Activated CD4-positive, alpha-beta T cell treated with anti-CD3 and anti-CD28 coated beads, Interleukin-2, amount 10 ng/mL, durations not matched to agents 24 days and 14 days (primary cell): ENCODE measurements at regions of chr11 and their contacts with region 1.

Region 1: DNA sequence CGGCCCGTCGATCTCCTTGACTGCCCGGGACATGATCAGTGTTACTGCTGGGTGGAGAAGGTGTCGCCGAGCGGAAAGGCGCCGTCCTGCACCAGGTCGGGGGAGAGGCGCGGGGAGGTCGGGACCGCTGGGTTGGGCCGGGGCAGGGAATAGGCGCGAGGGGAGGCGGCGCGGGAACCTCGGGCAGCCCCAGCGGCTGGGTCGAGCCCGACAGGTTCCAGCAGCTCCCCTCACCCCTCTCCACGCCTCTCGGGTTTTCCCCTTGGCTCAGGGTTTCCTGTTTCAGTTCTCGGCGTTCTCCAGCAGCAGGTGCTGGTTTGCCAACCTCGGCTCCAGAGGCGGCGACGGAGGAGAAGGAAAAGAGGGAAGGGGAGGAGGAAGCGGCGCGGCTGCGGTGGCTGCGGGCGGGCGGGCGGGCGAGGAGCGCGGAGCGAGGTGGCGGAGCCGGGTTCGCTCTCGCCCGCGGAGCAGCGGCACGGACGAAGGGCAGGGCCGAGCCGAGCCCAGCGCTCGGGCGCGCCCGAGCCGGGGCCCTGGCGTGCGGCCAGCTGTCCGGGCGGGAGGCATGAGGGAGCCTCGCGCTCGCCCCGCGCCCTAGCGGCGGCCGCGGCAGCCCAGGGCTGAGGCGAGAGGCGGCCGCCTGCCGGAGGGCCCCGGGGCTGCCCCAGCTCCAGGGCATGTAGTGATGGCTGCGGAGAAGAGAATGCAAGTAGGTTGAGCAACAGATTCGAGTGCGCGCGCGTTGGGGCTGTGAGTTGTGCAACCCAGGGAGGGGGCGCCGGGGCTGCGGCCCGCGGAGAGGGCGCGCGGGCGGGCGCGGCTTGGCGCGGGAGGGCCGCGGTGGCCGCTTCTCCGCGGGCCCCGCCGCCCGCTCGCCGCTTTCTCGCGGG is at the start of gene ZC3H12C:
- DNase-seq: peak; percentile 86
- H3K4me3 Mint-ChIP-seq: peak within 1 kb of the TSS; percentile 88
- H3K27ac Mint-ChIP-seq: peak within 1 kb of the TSS; percentile 95
- H3K4me1 Mint-ChIP-seq: peaks cover 18% of the 10 kb centered on the region
- H3K27me3 Mint-ChIP-seq: peaks cover 53% of the 10 kb centered on the region
- total RNA-seq, gene ZC3H12C: 6.7 and 7.5 TPM in 2 replicates

Region 2: GRCh38 chr11:109853156-109853776 is 239.5 kb before region 1 on chr11:
- intact Hi-C with region 1: loop called (anchors 10 kb)
- DNase-seq: peak; percentile 60
- H3K4me3 Mint-ChIP-seq: no peak overlapping the region
- H3K27ac Mint-ChIP-seq: no peak overlapping the region
- H3K4me1 Mint-ChIP-seq: no peaks in the 10 kb centered on the region
- H3K27me3 Mint-ChIP-seq: peaks cover 5% of the 10 kb centered on the region

Region 3: DNA sequence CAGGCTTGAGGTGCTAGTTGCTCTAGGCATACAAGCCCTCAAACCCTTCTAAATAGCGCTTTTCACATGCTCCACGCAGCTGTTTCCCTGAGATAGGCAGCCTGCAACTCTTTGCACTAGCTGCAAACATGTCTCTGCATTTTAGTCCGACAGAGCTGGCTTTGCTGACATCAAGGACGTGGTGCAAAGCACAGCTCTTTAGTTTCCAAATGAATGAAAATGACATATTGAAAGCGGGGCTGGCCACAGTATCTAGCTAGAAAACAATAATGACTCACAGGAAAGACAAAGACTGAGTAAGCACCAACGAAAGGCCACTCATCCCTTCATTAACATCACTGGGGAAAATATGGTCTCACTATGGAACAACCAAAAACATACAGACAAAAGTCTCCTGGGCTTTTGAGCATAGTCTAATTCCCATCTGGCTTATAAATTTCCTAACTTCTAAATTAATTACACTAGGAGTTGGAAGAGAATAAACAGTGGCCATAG is 14.9 kb before region 1 on chr11:
- intact Hi-C with region 1: loop called (anchors 1 kb)
- DNase-seq: peak; percentile 80
- H3K4me3 Mint-ChIP-seq: peak overlapping the region; percentile 43
- H3K27ac Mint-ChIP-seq: peak overlapping the region; percentile 95
- H3K4me1 Mint-ChIP-seq: peaks cover 26% of the 10 kb centered on the region
- H3K27me3 Mint-ChIP-seq: peaks cover 5% of the 10 kb centered on the region

Region 4: DNA sequence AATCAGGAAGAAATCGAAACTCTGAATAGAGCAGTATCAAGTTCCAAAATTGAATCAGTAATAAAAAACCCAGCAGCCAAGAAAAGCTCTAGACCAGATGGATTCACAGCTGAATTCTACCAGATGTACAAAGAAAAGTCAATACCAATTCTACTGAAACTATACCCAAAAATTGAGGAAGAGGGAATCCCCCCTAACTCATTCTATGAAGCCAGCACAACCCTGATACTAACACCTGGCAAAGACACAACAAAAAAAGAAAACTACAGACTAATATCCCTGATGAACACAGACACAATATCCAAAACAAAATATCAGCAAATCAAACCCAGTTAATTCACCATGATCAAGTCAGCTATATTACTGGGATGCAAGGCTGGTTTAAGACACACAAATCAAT is 98.1 kb after region 1 on chr11:
- intact Hi-C with region 1: loop called (anchors 5 kb)
- DNase-seq: no peak
- H3K4me3 Mint-ChIP-seq: no peak overlapping the region
- H3K27ac Mint-ChIP-seq: no peak overlapping the region
- H3K4me1 Mint-ChIP-seq: peaks cover 16% of the 10 kb centered on the region
- H3K27me3 Mint-ChIP-seq: peaks cover 45% of the 10 kb centered on the region

Region 5: GRCh38 chr11:110429731-110430266 is 337.0 kb after region 1 on chr11 and contains the start of gene FDX1:
- intact Hi-C with region 1: loop called (anchors 10 kb)
- DNase-seq: peak; percentile 95
- H3K4me3 Mint-ChIP-seq: peak within 1 kb of the TSS; percentile 99
- H3K27ac Mint-ChIP-seq: peak within 1 kb of the TSS; percentile 98
- H3K4me1 Mint-ChIP-seq: peaks cover 39% of the 10 kb centered on the region
- H3K27me3 Mint-ChIP-seq: no peaks in the 10 kb centered on the region
- total RNA-seq, gene FDX1: 14.2 and 16.4 TPM in 2 replicates

Region 6: DNA sequence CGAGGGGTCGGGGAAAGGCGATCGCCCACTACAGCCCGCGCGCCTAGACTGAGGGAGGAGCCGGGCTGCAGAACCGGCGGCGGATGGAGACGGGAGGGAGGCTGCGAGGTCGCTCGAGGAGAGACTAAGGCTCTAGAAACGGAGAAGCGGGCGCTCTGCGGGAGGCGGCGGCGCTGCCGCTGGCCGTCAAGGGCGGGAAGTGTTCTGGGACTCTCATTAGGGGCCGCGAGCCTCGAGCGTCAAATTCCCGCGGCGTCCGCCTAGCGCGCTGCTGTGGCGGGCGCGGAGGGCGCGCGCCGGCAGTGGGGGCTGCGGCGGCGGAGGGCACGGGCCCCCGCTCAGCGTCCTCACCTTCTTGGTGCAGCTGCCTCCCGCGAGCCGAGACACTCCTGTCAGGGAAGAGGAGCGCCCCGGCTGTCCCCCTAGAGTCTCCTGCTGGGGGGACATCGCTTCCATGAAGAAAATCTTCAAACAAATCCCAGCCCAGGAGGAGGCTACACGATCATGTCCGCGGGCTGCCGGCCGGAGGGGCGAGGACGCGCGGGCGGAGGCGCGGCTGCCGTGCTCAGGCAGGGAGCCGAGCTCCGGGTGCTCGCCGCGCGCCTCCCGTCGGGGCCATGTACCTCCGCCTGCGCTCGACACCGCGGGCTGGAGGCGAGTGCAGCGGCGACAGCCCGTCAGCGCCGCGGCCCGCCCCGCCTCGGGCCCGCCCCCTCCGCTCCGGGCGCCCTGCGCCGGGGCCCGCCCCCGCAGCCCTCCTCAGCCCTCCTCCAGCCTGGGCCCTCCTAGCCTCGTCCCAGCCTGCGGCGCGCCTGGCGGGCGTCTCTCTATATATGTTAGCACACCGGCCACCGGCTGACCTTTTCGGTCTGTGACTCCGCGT is 619.3 kb after region 1 on chr11 and contains the start of gene ARHGAP20:
- intact Hi-C with region 1: loop called (anchors 5 kb)
- DNase-seq: peak; percentile 82
- H3K4me3 Mint-ChIP-seq: peak within 1 kb of the TSS; percentile 65
- H3K27ac Mint-ChIP-seq: no peak within 1 kb of the TSS
- H3K4me1 Mint-ChIP-seq: peaks cover 14% of the 10 kb centered on the region
- H3K27me3 Mint-ChIP-seq: peaks cover 60% of the 10 kb centered on the region
- total RNA-seq, gene ARHGAP20: not detected in 2 replicates